Activated CD8-positive, alpha-beta T cell treated with anti-CD3 and anti-CD28 coated beads, Interleukin-2, amount 10 ng/mL, durations not matched to agents 7 days and 5 days (primary cell): ENCODE measurements at regions of chr2 and their contacts with region 1.

Region 1: DNA sequence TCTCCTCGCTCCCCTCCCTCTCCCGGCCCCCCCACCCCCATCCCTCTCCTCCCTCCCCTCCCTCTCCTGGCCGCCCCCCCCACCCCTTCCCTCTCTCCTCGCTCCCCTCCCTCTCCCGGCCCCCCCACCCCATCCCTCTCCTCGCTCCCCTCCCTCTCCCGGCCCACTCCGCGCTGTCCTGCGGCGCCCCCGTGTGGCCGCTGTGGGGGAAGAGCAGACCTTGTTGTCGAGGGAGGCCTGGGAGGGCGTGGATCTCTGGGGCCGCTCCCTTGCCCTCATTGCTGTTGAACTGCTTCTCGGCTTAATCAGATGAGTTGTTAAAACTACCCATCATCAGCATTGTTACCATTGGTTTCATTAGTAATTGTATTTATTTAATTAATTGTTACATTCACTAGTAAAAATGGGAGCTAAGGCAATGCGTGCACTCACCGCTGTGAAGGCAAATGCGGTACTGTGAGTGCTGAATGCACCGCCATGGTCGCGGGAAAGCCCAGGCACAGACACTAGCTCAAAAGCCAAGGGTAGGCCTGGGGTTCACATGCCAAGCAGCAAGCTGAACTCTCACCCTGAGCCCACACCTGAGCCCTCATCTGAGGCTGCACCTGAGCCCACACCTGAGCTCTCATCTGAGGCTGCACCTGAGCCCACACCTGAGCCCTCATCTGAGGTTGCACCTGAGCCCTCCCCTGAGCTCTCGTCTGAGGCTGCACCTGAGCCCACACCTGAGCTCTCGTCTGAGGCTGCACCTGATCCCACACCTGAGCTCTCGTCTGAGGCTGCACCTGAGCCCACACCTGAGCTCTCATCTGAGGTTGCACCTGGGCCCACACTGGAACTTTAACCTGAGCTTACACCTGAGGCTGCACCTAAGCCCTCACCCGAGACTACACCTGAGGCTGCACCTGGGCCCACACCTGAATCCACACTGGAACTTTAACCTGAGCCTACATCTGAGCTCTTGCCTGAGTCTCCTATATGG is 8.8 kb downstream of the RTP5 start:
- DNase-seq: peak; percentile 84
- ATAC-seq: peak; percentile 24
- H3K4me3 Mint-ChIP-seq: no peak overlapping the region
- H3K27ac Mint-ChIP-seq: no peak overlapping the region
- H3K4me1 Mint-ChIP-seq: peaks cover 36% of the 10 kb centered on the region
- H3K27me3 Mint-ChIP-seq: no peaks in the 10 kb centered on the region

Region 2: GRCh38 chr2:241686649-241687425 is 191.4 kb before region 1 on chr2 and contains the start of gene DTYMK:
- CTCF ChIA-PET with region 1: interaction called, 24 read pairs
- POLR2A ChIA-PET with region 1: interaction called, 4 read pairs
- DNase-seq: peak; percentile 96
- ATAC-seq: peak; percentile 97
- H3K4me3 Mint-ChIP-seq: peak within 1 kb of the TSS; percentile 90
- H3K27ac Mint-ChIP-seq: peak within 1 kb of the TSS; percentile 97
- H3K4me1 Mint-ChIP-seq: peaks cover 40% of the 10 kb centered on the region
- H3K27me3 Mint-ChIP-seq: no peaks in the 10 kb centered on the region
- total RNA-seq, gene DTYMK: 101 to 103 TPM

Region 3: GRCh38 chr2:241702132-241703031 is 175.9 kb before region 1 on chr2:
- CTCF ChIA-PET with region 1: interaction called, 6 read pairs
- POLR2A ChIA-PET with region 1: interaction called, 10 read pairs
- DNase-seq: peak; percentile 92
- ATAC-seq: peak; percentile 80
- H3K4me3 Mint-ChIP-seq: peak overlapping the region; percentile 86
- H3K27ac Mint-ChIP-seq: peak overlapping the region; percentile 81
- H3K4me1 Mint-ChIP-seq: peaks cover 24% of the 10 kb centered on the region
- H3K27me3 Mint-ChIP-seq: no peaks in the 10 kb centered on the region

Region 4: DNA sequence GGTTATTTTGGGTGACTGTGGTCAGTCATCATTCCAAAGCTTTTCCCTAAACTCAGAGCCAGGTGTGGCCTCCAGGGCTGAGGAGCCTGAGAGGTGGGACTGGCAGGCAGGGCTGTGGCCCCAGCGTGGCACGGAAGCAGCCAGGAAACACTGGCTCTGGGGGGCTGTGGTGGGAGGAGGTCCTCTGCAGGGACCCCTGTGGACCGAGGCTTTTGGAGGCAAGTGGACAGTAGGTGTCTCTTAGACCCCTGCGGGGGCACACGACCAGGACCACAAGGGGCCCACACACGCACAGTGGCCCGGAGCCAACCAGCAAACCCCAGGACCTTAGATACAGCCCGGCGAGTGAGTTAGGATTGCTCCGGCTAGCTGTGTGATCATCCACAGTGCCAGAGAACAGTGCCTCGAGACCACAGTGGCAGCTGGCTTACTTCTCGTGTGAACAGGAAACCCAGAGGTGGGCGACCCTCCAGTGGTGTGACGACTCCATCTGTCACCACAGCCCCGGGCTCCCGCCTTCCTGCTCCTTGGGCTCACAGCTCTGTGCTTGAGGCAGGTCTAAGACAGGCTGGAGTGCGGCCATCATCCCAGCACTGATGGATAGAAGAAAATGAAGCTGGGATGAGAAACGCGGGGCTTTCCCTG is 10.4 kb before region 1 on chr2:
- CTCF ChIA-PET with region 1: interaction called, 19 read pairs
- POLR2A ChIA-PET with region 1: interaction called, 4 read pairs
- DNase-seq: peak; percentile 73
- ATAC-seq: peak; percentile 28
- H3K4me3 Mint-ChIP-seq: no peak overlapping the region
- H3K27ac Mint-ChIP-seq: peak overlapping the region; percentile 18
- H3K4me1 Mint-ChIP-seq: peaks cover 73% of the 10 kb centered on the region
- H3K27me3 Mint-ChIP-seq: peaks cover 20% of the 10 kb centered on the region

Region 5: DNA sequence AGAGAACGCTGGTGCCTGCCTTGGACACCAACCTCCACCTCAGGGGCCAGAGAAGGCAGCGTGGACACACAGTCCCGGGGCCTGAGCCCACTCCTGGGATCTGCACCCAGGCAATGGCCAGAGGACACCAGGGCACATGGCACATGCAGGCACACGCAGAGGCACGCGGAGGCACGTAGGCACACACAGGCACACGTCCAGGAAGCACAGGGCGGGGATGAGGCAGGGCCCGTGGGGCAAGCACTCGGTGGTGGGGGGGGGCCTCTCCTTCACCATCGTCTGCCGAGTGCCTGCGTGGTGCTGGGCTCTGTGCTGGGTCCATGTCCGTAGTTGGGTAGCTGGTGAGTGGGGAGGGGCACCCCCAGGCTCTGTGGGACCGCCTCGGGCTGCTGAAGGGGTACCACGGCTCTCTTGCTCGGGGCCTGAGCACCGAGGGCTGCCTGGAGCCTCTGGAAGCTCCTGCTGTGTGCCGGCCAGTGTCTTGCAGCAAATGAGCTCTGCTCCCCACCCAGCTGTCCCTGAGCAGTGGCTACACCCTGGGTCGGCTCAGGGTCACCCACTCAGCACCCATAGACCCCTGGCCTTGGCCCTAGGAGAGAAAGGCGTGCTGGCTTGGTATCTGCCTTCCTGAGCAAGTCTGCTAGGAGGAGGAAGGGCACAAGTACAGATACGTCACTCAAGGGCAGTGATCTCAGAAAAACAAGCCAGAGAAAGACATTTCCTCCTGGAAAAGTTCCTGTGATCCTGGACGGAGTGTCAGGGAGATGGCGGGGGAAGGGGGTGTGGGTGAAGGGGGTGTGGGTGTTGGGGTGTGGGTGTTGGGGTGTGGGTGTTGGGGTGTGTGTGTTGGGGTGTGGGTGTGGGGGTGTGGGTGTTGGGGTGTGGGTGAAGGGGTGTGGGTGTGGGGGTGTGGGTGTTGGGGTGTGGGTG is 17.7 kb after region 1 on chr2:
- CTCF ChIA-PET with region 1: no interaction called
- POLR2A ChIA-PET with region 1: no interaction called
- DNase-seq: peak; percentile 22
- ATAC-seq: no peak
- H3K4me3 Mint-ChIP-seq: no peak overlapping the region
- H3K27ac Mint-ChIP-seq: peak overlapping the region; percentile 67
- H3K4me1 Mint-ChIP-seq: no peaks in the 10 kb centered on the region
- H3K27me3 Mint-ChIP-seq: no peaks in the 10 kb centered on the region